HEK293 (cell line): ENCODE measurements at regions of chr12 and their contacts with region 1.

Region 1: DNA sequence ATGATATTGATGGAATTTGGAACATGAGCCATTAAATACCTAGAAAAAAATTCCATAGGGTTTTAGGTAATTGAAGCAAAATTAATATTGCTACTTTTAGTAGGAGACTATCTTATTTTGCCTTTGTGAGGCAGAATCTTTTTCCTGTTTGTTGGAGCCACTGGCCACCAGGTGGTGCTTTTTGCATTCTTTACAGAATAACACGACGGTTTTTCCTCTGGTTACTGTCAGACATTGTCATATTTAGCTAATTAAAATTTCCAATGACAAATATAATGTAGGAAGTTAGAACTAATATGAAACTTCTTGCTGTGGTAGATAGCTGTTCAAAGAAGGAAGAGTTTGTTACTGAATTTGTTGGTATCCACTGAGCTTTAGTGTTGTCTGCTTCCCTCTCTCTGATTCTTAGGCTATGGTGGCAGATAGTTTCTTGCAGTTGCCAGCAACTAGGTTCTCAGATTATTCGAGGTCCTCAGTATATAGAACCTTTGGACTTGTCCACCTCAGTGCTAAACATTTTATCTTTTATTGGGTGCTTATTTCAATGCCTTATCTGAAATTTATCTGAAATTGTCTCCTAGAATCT is 25.7 kb downstream of the RAB21 start:
- H3K4me3 ChIP-seq: no peak overlapping the region
- H3K27ac ChIP-seq: no peak overlapping the region
- H3K4me1 ChIP-seq: no peaks in the 10 kb centered on the region
- CTCF ChIP-seq: peak; percentile 48; the same call in 1 of the 2 replicates

Region 2: DNA sequence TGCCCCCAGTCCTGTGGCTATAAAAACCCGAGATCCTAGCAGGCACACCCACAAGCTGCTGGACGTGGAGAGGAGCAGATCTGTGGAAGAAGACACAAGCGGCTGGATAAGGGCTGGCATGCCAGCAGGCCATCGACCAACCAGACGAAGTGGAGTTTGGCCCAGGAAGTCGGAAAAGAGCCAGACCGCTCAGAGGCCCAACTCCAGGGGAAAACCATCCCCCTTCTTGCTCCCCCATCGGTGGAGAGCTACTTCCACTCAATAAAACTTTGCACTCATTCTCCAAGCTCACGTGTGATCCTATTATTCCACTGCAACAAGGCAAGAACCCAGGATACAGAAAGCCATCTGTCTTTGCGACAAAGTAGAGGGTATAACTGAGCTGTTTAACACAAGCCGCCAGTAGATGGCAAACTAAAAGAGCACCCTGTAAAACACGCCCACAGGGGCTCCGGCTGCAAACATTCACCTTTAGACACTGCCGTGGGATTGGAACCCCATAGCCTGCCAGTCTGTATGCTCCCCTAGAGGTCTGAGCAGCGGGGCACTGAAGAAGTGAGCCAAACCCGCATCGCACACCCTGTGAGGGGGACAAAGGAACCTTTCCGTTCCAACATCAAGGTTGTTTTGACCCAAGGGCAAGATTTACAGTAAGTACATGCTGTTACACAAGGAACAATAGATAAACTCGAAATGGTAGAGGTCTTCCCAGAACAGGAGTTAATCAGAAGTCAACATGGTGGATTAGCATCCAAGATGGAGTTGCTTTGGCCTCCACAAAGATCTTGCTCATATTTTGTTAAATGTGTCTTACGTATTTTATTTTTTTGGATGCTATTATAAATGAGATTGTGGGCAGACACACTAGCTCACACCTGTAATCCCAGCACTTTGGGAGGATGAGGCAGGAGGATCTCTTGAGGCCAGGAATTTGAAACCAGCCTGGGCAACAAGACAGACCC is 48.3 kb before region 1 on chr12:
- CTCF ChIA-PET with region 1: no interaction called
- POLR2A ChIA-PET with region 1: no interaction called
- H3K4me3 ChIP-seq: no peak overlapping the region
- H3K27ac ChIP-seq: no peak overlapping the region
- H3K4me1 ChIP-seq: no peaks in the 10 kb centered on the region
- CTCF ChIP-seq: no peak

Region 3: GRCh38 chr12:71791473-71792150 is 11.3 kb after region 1 on chr12:
- CTCF ChIA-PET with region 1: interaction called, 25 read pairs
- POLR2A ChIA-PET with region 1: no interaction called
- H3K4me3 ChIP-seq: no peak overlapping the region
- H3K27ac ChIP-seq: no peak overlapping the region
- H3K4me1 ChIP-seq: no peaks in the 10 kb centered on the region
- CTCF ChIP-seq: no peak

Region 4: GRCh38 chr12:71797531-71797930 is 17.2 kb after region 1 on chr12:
- CTCF ChIA-PET with region 1: interaction called, 25 read pairs
- POLR2A ChIA-PET with region 1: no interaction called
- H3K4me3 ChIP-seq: no peak overlapping the region
- H3K27ac ChIP-seq: no peak overlapping the region
- H3K4me1 ChIP-seq: no peaks in the 10 kb centered on the region
- CTCF ChIP-seq: no peak

Region 5: GRCh38 chr12:71846322-71846940 is 66.1 kb after region 1 on chr12:
- CTCF ChIA-PET with region 1: interaction called, 15 read pairs
- POLR2A ChIA-PET with region 1: no interaction called
- H3K4me3 ChIP-seq: no peak overlapping the region
- H3K27ac ChIP-seq: no peak overlapping the region
- H3K4me1 ChIP-seq: no peaks in the 10 kb centered on the region
- CTCF ChIP-seq: no peak

Region 6: GRCh38 chr12:71938728-71939385 is 158.5 kb after region 1 on chr12 and contains the start of gene TPH2:
- CTCF ChIA-PET with region 1: interaction called, 23 read pairs
- POLR2A ChIA-PET with region 1: no interaction called
- H3K4me3 ChIP-seq: no peak within 1 kb of the TSS
- H3K27ac ChIP-seq: no peak within 1 kb of the TSS
- H3K4me1 ChIP-seq: no peaks in the 10 kb centered on the region
- CTCF ChIP-seq: peak; percentile 64

Region 7: DNA sequence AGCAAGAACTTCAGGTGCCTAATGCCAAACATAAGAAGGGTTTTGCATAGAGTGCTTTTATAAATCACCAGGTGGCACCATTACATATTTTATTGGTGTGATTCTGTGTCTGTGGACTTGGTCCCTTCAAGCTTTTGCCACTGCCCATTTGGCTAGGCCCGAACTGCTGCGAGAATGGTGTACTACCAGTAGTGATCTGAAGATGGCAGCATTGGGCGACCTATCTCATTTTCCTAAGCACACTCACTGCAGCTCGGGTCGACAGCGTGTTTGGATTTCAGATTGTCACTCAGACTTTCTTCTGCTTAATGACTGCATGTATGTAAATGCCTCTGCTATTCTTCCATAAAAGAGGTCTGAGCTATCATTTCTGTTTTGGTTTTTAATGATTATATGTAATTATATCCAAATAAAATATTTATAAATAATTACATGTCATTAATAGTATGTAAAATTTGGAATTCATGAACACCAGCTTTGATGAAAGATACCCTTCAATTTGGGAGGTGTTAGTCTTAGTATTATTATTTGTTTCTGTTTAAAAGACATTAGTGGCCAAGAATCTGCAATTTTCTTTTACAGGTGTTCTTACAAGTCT is 236.8 kb after region 1 on chr12:
- CTCF ChIA-PET with region 1: no interaction called
- POLR2A ChIA-PET with region 1: no interaction called
- H3K4me3 ChIP-seq: no peak overlapping the region
- H3K27ac ChIP-seq: no peak overlapping the region
- H3K4me1 ChIP-seq: no peaks in the 10 kb centered on the region
- CTCF ChIP-seq: peak; percentile 37; the same call in 1 of the 2 replicates